Dorsolateral prefrontal cortex (tissue), 120 donors: ENCODE measurements at regions of chr4 and their contacts with region 1.

Region 1: DNA sequence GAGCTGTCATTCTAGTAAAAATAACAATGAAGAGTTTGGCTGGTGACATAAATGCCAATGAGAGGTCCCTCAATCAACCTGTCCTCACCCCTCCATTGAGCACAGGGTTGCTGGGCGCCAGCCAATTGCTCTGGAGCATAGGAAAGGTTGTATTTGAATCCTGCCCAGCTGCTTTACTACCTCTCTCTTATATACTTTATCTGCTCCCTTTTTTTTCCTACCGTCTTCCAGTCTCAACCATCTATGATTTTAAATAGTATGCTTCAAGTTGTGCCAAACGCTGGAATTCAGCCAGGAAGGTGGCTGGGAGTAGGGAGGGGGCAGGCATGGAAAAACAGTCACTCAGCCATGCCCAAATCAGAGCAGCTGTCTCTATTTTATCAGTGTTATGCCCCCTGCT is 153.8 kb downstream of the NR3C2 start:
- DNase-seq: peak in 1 of 10 donors; percentile 43
- H3K4me3 ChIP-seq: no peak overlapping the region
- H3K27ac ChIP-seq: no peak overlapping the region
- H3K27me3 ChIP-seq: no peaks in the 10 kb centered on the region
- CTCF ChIP-seq: no peak

Region 2: DNA sequence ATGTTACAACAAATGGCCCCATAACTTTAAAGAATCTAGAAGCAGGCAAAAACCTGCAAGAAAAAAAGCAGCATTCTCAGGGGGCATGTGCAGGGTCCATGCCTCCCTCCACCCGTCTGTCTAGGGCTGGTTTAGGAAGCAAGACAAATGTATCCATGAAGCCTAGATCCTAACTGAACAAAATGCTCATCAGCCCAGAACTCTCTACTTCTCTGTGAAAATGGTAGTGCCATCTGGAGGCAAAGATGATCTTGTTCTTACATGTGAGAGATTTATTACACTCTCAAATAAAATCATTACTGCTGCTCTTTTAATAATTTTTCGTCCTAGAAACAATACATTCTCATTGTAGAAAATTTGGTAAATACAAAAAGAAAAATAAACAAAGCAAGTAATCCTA is 127.1 kb after region 1 on chr4:
- intact Hi-C with region 1: loop called in 1 of 2 experiments (anchors 10 kb)
- DNase-seq: no peak
- H3K4me3 ChIP-seq: no peak overlapping the region
- H3K27ac ChIP-seq: no peak overlapping the region
- H3K27me3 ChIP-seq: no peaks in the 10 kb centered on the region
- CTCF ChIP-seq: peak in 39 of 56 donors; percentile 9 to 64 (median 32)

Region 3: DNA sequence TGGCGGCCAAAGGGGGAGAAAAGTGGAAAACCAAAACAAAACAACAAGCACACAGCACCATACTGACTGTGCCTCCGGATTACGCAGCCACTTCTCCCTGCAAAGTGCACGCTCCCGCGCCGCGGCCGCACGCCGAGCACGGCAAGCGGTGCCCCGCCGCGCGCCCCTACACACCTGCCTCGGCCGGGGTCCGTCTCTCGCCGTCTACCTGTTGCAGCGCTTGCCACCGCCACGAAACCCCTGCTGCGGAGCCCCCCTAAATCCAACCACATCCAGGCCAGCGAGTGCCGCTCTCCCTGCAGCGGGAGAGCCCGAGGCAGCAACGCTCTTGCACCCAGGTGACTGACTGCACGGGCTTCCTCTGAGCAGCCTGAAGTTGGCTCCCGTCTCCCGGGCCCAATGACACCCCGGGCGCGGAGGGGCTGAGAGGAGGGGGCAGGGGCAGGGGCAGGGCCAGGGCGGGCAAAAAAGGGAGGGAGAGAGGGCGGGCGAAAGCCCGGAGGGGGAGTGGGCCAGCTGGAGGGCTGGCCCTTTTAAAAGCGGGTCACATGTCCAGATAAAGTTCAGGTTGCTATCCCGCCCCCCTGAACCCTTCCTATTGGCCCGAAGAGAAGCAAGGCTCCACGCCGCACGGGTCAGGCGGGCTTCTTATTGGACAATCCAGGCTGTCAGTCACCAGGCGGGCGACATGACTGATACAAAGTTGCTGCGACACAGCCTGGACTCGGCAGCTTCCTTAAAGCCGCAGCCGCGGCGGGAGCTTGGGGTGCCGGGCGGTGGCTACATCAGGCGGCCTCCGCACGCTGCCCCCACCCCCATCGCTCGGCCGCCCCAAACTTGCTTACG is 153.8 kb after region 1 on chr4 and contains the start of gene NR3C2:
- intact Hi-C with region 1: loop called in 1 of 2 experiments (anchors 10 kb)
- DNase-seq: peak; percentile 99 to 100 (median 100)
- H3K4me3 ChIP-seq: peak within 1 kb of the TSS; percentile 67 to 99 (median 94)
- H3K27ac ChIP-seq: peak within 1 kb of the TSS; percentile 62 to 96 (median 91)
- H3K27me3 ChIP-seq: no peaks in the 10 kb centered on the region
- CTCF ChIP-seq: peak in 5 of 56 donors; percentile 5 to 34 (median 10)
- total RNA-seq, gene NR3C2: 32.1 to 89.5 (median 56.4) TPM